ENCODE measurements at regions of chr6 and their contacts with region 1.

Region 1: DNA sequence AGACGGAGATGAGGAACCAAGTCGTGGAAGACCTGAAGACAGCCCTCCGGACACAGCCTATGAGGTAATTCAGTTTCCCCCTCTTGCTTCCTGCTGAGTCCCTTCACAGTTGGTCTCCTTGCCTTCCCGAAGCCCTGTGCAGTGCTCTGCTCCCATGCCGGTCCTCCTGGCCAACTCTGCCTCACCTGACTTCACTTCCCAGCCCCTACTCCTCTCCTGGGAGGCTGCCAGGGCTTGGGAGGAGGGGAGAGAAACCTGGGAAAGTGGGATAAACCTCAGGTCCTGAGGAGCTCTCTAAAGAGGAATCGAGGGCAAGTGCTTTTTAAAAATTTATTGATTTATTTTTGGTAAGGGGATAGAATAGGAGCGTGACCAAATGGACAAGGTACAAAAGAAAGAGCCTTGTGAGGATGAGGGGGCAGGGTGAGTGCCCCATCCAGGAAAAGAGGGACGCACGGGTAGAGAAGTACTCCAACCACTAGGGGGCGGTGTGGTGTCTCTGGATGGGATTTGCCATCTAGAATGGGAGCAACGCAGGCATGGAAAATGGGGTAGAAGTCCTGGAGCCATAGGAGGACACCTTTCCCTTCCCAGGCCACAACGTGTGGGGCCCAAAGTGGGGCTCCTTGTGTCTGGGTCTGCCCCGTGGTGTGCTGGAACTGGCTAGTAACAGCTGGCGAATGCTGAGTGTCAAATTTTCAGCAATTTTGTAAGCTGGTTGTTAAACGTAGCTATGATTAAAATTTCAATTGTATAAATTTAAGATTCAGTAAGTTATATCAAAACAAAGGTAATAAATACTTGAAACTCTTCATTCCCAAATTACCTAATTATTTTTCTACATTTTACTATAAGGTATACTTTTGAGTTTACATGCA is 69.0 kb downstream of the MOCS1 start:
- DNase-seq: peak; percentile 78
- ATAC-seq: peak; percentile 47
- H3K4me3 Mint-ChIP-seq: no peak overlapping the region
- H3K27ac Mint-ChIP-seq: no peak overlapping the region
- H3K4me1 Mint-ChIP-seq: no peaks in the 10 kb centered on the region
- H3K27me3 Mint-ChIP-seq: peaks cover 5% of the 10 kb centered on the region
- CTCF ChIP-seq: peak; percentile 95

Region 2: DNA sequence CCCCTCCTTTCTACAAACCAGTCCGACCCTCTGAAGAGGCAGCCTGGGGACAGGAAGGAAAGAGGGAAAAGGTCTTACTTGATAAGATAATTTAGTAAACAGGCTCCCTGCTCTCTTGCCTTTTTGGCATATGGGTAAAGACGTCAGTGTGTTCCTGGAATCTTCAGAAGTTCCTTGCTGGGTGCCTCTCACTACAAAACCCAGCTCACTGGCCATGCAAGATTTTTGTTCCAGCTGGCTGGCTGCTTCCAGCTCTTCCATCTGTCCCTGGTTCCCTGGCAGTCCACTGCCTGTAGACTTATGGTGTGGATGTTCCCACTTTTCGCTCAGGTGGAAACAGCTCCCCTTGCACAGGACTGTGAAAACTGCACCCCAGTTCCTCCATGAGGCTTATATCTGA is 11.6 kb after region 1 on chr6:
- CTCF ChIA-PET with region 1: interaction called, 25 read pairs
- POLR2A ChIA-PET with region 1: no interaction called
- intact Hi-C with region 1: no loop called
- DNase-seq: no peak
- ATAC-seq: no peak
- H3K4me3 Mint-ChIP-seq: no peak overlapping the region
- H3K27ac Mint-ChIP-seq: no peak overlapping the region
- H3K4me1 Mint-ChIP-seq: no peaks in the 10 kb centered on the region
- H3K27me3 Mint-ChIP-seq: peaks cover 1% of the 10 kb centered on the region
- CTCF ChIP-seq: no peak

Region 3: GRCh38 chr6:40308533-40309306 is 443.5 kb after region 1 on chr6:
- CTCF ChIA-PET with region 1: interaction called, 7 read pairs
- POLR2A ChIA-PET with region 1: no interaction called
- intact Hi-C with region 1: loop called (anchors 10 kb)
- DNase-seq: peak; percentile 70
- ATAC-seq: peak; percentile 62
- H3K4me3 Mint-ChIP-seq: no peak overlapping the region
- H3K27ac Mint-ChIP-seq: no peak overlapping the region
- H3K4me1 Mint-ChIP-seq: no peaks in the 10 kb centered on the region
- H3K27me3 Mint-ChIP-seq: peaks cover 30% of the 10 kb centered on the region
- CTCF ChIP-seq: peak; percentile 95